ENCODE measurements at regions of chr22 and their contacts with region 1.

Region 1: DNA sequence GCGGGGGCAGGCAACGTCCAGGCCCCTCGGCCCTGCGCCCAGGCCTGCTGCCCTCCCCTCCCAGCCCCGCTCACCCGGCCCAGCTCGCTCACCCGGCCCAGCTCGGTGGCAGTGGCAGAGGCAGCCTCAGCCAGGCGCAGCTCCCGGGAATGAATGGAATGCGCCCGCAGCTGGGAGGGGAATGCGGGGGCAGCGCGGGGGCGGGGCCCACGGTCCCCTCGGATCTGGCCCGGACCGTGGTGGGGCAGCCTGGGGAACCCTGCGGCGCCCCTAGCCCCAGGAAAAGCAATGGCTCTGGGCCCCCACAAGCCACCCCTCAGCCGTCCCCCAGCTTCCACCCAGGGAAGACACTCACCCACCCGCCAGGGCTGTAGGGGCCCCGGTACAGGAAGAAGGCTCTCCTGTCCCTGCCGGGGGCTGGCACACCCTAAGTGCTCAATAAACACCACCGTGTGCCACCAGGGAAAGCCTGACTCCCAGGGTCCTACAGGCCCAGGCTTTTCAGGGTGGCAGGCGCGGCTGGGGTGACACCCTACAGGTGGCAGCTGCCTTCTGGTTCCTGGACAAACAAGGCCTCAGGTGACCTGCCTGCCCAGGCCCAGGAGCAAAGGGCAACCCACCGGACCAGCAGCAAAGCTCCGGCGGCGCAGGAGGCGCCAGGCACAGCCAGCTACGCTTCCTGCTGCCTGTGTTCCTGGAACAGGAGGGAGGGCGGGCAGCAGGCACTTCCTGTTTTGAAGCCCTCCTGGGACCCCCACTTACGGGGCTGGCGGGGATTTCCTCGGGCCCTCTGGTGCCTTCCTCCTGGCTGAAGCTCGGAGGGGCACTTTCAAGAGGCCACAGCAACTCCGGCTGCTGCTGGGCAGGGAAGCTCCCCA is 13.8 kb downstream of the PLXNB2 start:
- DNase-seq: peak; percentile 65
- H3K4me3 ChIP-seq: peak overlapping the region; percentile 65
- H3K27ac ChIP-seq: peak overlapping the region; percentile 65
- H3K4me1 ChIP-seq: peaks cover 56% of the 10 kb centered on the region
- CTCF ChIP-seq: no peak

Region 2: GRCh38 chr22:50314455-50315288 is 21.0 kb after region 1 on chr22:
- CTCF ChIA-PET with region 1: interaction called, 3 read pairs
- POLR2A ChIA-PET with region 1: interaction called, 3 read pairs
- intact Hi-C with region 1: loop called (anchors 1 kb)
- DNase-seq: peak; percentile 93
- H3K4me3 ChIP-seq: peak overlapping the region; percentile 71
- H3K27ac ChIP-seq: peak overlapping the region; percentile 91
- H3K4me1 ChIP-seq: peaks cover 64% of the 10 kb centered on the region
- CTCF ChIP-seq: no peak

Region 3: DNA sequence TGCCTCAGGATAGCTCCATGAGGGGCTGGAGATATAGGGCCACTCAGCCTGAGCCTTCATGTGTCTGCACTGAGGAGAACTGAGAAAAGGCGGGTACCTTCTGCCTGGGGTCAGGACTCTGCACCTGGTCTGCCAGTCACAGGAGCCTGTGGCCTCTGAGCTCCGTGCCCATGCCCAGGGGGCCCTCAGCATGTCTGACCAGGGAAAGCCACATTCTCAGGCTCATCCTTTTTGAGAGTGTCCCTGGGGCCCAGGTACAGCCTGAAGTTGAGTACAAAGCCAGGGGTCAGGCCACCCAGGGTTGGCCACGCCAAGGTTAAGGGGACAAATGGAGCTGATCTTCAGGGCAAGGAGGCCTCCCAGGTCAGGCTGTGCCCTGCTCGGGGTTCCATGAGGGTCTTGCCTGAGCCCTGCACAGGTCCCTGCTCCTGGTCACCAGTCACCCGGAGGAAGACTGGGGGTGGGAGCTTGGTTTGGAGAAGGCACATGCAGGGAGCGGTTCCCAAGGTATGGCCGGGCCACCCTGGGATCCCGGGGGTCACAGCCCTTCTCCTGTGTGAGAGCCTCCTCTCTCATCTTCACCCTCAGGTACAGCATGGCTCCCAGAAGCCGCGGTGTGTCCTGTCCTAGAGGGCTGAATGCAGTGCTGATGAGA is 27.1 kb after region 1 on chr22:
- CTCF ChIA-PET with region 1: interaction called, 3 read pairs
- POLR2A ChIA-PET with region 1: interaction called, 11 read pairs
- intact Hi-C with region 1: loop called (anchors 5 kb)
- DNase-seq: no peak
- H3K4me3 ChIP-seq: no peak overlapping the region
- H3K27ac ChIP-seq: no peak overlapping the region
- H3K4me1 ChIP-seq: peaks cover 56% of the 10 kb centered on the region
- CTCF ChIP-seq: no peak

Region 4: GRCh38 chr22:50326959-50327710 is 33.5 kb after region 1 on chr22 and contains the start of gene DENND6B:
- CTCF ChIA-PET with region 1: no interaction called
- POLR2A ChIA-PET with region 1: interaction called, 3 read pairs
- intact Hi-C with region 1: loop called (anchors 5 kb)
- DNase-seq: peak; percentile 87
- H3K4me3 ChIP-seq: peak within 1 kb of the TSS; percentile 77
- H3K27ac ChIP-seq: peak within 1 kb of the TSS; percentile 33
- H3K4me1 ChIP-seq: peaks cover 33% of the 10 kb centered on the region
- CTCF ChIP-seq: peak; percentile 54
- total RNA-seq, gene DENND6B: 25.0 and 31.6 TPM in 2 replicates

Region 5: DNA sequence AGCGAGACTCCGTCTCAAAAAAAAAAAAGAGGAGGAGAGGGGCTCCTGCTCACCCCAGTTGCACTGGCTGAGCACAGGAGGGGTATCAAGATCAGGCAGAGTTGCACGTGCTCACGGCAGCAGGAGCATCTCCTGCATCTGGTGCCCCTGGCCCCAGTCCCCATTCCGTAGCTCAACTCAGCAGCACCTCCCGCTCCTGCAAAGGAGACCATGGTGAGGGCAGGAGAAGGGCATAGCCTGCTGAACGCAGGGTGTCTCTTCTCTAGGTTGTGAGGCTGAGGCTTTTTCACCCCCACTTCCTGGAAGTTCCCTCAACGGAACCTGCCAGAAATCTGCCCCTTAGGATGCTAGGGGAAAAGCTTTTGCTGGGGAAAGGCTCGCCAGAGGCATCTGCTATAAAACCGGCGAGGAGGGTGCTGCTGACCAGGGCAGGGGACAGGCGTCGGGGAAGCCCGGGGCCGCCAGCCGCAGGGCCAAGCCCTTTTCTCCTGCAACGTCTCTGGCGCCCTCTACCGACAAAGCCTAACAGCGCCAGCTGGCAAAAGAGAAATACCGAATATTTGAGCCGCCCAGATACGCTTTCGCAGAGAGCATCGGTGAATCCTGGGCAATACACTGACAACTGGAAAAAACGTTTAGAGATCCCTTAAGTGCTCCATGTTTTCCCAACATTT is 48.4 kb after region 1 on chr22:
- CTCF ChIA-PET with region 1: no interaction called
- POLR2A ChIA-PET with region 1: no interaction called
- intact Hi-C with region 1: loop called (anchors 1 kb)
- DNase-seq: peak; percentile 88
- H3K4me3 ChIP-seq: peak overlapping the region; percentile 100
- H3K27ac ChIP-seq: peak overlapping the region; percentile 72
- H3K4me1 ChIP-seq: peaks cover 20% of the 10 kb centered on the region
- CTCF ChIP-seq: peak; percentile 99

Region 6: DNA sequence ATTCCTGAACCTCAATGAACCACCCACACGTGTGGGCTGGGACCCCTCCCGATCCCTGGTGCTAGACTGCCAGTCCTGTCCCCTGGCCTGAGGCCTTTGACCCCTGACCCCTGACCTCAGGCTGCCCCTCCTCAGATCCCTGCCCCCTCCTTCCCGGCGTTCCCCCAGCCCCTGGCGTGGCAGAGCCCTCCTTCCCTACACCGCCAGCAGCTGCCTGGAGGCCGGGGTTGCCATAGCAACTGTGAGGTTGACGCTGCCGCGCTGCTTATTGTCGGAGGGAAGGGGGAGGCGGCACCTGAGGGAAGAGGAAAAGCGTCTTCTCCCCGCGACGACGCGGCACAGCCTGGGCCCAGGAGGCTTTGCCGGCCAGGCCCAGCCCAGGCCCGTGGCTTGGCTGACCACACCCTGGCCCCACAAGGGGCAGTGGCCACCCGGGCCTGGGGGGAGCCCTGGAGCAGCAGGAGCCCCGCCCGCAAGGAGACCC is 411.6 kb after region 1 on chr22:
- CTCF ChIA-PET with region 1: no interaction called
- POLR2A ChIA-PET with region 1: no interaction called
- intact Hi-C with region 1: no loop called
- DNase-seq: no peak
- H3K4me3 ChIP-seq: no peak overlapping the region
- H3K27ac ChIP-seq: no peak overlapping the region
- H3K4me1 ChIP-seq: no peaks in the 10 kb centered on the region
- CTCF ChIP-seq: no peak

Measured in OCI-LY7 (cell line).